Sigmoid colon (tissue), 7 donors: ENCODE measurements at regions of chr2 and their contacts with region 1.

Region 1: DNA sequence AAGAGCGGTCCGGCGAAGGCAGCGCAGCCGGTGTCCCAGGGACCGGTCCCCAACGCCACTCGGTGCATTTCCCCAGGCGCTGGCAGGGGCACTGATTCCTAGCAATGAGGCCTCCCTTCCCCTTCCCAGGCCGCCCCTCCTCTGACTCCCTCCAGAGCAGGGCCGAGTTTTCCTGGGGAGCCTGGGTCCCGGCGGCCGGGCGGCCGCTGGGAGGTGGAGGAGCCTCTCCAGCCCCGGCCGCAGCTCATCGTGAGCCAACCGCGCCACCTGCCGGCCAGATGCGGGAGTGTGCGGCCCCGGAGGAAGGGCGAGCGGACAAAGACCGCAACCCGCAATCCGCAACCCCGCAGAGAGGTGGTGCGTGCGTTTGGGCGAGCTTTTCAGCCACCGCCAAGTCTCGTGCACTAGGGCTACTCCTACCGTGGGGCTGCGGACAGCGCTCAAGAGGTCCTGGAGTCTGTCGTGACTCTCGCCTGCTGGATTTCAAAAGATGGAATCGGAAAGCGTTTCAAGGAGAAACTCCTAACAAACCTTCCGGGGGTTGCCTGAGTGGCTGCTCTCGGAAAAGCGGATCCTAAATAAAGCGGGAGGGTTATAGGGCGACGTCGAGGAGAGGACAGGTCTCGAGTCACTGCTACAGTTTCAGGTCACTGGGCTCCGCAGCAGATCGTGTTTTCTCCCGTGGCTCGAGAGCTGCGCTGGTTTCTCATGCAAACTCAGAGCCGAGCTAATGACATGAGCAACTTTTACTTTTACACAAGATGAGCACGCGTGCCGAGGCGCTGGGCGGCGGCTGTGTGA is 1.5 kb upstream of the EPHA4 start:
- DNase-seq: peak; percentile 91
- H3K4me3 ChIP-seq: peak overlapping the region; percentile 66 to 93 (median 78)
- H3K27ac ChIP-seq: peak overlapping the region; percentile 87 to 93 (median 92)
- H3K4me1 ChIP-seq: peaks cover 0 to 39% (median 25%) of the 10 kb centered on the region in 4 donors
- H3K27me3 ChIP-seq: peaks cover 0 to 17% (median 0%) of the 10 kb centered on the region in 3 donors
- CTCF ChIP-seq: peak; percentile 93 to 99 (median 98)
- EP300 ChIP-seq: no peak
- POLR2A ChIP-seq: no peak

Region 2: GRCh38 chr2:219736209-219736608 is 1837.4 kb before region 1 on chr2:
- intact Hi-C with region 1: loop called (anchors 2 kb)
- DNase-seq: no peak
- H3K4me3 ChIP-seq: no peak overlapping the region
- H3K27ac ChIP-seq: no peak overlapping the region
- H3K4me1 ChIP-seq: no peaks in the 10 kb centered on the region
- H3K27me3 ChIP-seq: no peaks in the 10 kb centered on the region
- CTCF ChIP-seq: peak in 3 of 4 experiments; percentile 24 to 54 (median 36)
- EP300 ChIP-seq: no peak
- POLR2A ChIP-seq: no peak

Region 3: DNA sequence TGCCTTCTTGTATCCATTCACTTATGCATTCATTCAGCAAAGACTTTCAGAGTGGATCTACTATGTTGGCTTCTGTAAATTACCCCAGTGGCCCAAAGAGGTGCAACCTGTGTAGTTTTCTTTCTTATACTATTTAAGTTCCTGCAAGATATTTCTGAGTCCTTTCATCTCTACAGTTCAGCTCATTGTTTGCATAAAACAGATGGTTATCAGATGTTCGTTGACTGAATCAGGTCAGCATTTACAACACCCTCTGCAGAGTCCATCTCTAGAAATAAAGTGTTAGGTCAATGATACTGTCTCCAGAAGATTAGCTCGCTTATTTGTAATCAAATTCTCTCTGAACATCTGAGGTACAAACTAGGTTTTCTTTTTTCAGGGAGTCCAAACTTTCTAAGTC is 729.4 kb before region 1 on chr2:
- intact Hi-C with region 1: loop called (anchors 5 kb)
- DNase-seq: no peak
- H3K4me3 ChIP-seq: no peak overlapping the region
- H3K27ac ChIP-seq: no peak overlapping the region
- H3K4me1 ChIP-seq: no peaks in the 10 kb centered on the region
- H3K27me3 ChIP-seq: no peaks in the 10 kb centered on the region
- CTCF ChIP-seq: no peak
- EP300 ChIP-seq: no peak
- POLR2A ChIP-seq: no peak

Region 4: GRCh38 chr2:221389904-221390303 is 183.7 kb before region 1 on chr2:
- intact Hi-C with region 1: loop called (anchors 1 kb)
- DNase-seq: no peak
- H3K4me3 ChIP-seq: peak overlapping the region in 1 of 4 donors; percentile 1
- H3K27ac ChIP-seq: peak overlapping the region in 3 of 4 donors; percentile 63 to 78 (median 67)
- H3K4me1 ChIP-seq: peaks cover 0 to 35% (median 23%) of the 10 kb centered on the region in 4 donors
- H3K27me3 ChIP-seq: no peaks in the 10 kb centered on the region
- CTCF ChIP-seq: no peak
- EP300 ChIP-seq: peak in 3 of 4 donors; percentile 21 to 87 (median 84)
- POLR2A ChIP-seq: no peak

Region 5: GRCh38 chr2:221529943-221530652 is 43.5 kb before region 1 on chr2:
- intact Hi-C with region 1: loop called (anchors 5 kb)
- DNase-seq: no peak
- H3K4me3 ChIP-seq: no peak overlapping the region
- H3K27ac ChIP-seq: peak overlapping the region in 1 of 4 donors; percentile 22
- H3K4me1 ChIP-seq: peaks cover 0 to 54% (median 45%) of the 10 kb centered on the region in 4 donors
- H3K27me3 ChIP-seq: no peaks in the 10 kb centered on the region
- CTCF ChIP-seq: no peak
- EP300 ChIP-seq: no peak
- POLR2A ChIP-seq: no peak

Region 6: GRCh38 chr2:221689140-221689539 is 115.5 kb after region 1 on chr2:
- intact Hi-C with region 1: no loop called
- DNase-seq: no peak
- H3K4me3 ChIP-seq: no peak overlapping the region
- H3K27ac ChIP-seq: no peak overlapping the region
- H3K4me1 ChIP-seq: peaks cover 0 to 5% (median 0%) of the 10 kb centered on the region in 4 donors
- H3K27me3 ChIP-seq: no peaks in the 10 kb centered on the region
- CTCF ChIP-seq: no peak
- EP300 ChIP-seq: no peak
- POLR2A ChIP-seq: no peak